A549 (cell line): ENCODE measurements at regions of chr2 and their contacts with region 1.

Region 1: DNA sequence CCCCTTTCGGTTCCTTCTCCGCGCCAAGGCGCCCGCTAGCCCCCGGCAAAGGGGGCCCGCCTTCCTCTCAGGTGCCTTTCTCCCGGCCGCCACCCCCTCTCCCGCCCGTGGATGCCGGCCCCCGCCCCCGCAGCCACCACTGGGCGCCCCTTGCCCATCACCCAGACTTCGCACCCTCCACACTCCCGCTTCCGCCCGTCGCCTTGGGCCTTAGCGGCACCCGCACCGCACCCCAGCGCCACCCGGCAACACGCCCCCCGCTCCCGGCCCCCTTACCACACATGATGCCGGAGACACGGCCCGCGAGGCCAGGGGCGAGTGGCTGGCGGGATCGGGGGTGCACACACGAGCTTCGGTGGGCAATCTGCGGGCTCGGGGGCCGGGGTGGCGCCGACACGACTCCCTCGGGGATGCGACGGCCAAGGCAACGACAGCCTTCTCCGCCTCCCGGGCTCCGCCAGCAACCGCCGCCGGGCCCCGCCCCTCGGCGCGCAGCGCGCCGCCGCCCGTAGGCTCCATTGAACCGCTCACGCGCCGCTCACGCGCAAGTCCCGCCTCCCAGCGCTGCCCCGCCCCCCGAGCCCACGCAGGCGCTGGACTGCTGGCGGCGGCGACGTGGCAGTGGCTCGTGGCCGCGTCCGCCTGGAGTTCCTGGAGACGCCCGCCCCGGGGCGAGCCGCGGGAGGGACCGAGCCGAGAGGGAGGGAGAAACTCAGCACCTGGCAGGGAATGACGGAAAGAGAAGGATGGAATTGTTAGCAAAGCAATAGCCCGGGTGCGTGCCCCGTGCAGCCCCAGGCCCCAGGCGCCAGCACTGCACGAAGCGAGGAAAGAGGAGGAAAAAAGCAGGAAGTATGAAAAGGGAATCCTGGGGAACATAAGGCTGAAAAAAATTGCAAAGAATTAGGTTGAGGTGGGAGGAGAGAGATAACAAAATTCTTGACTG is at the start of gene GFPT1:
- DNase-seq: peak; percentile 78 to 95
- ATAC-seq: peak; percentile 93 to 95
- H3K4me3 ChIP-seq: peak within 1 kb of the TSS; percentile 77
- H3K27ac ChIP-seq: peak within 1 kb of the TSS; percentile 89 to 97
- H3K4me1 ChIP-seq: peaks cover 44% of the 10 kb centered on the region
- CTCF ChIP-seq: no peak
- EP300 ChIP-seq: no peak
- POLR2A ChIP-seq: peak; percentile 81
- RAD21 ChIP-seq: peak in 1 of 2 experiments; percentile 2; a peak in 1 of 5 replicates
- polyA plus RNA-seq, gene GFPT1: 53.3 and 59.9 TPM in 2 replicates

Region 2: GRCh38 chr2:69375494-69376353 is 11.3 kb before region 1 on chr2:
- CTCF ChIA-PET with region 1: interaction called, 15 read pairs
- POLR2A ChIA-PET with region 1: no interaction called
- DNase-seq: peak in 1 of 2 experiments; percentile 62
- ATAC-seq: peak; percentile 71 to 76; a peak in 5 of 6 replicates
- H3K4me3 ChIP-seq: no peak overlapping the region
- H3K27ac ChIP-seq: no peak overlapping the region
- H3K4me1 ChIP-seq: peaks cover 23% of the 10 kb centered on the region
- CTCF ChIP-seq: peak; percentile 78
- EP300 ChIP-seq: no peak
- POLR2A ChIP-seq: no peak
- RAD21 ChIP-seq: peak in 1 of 2 experiments; percentile 55; a peak in 3 of 5 replicates

Region 3: GRCh38 chr2:69773206-69773767 is 386.2 kb after region 1 on chr2:
- CTCF ChIA-PET with region 1: no interaction called
- POLR2A ChIA-PET with region 1: no interaction called
- DNase-seq: peak in 1 of 2 experiments; percentile 49
- ATAC-seq: peak; percentile 37 to 69
- H3K4me3 ChIP-seq: no peak overlapping the region
- H3K27ac ChIP-seq: peak overlapping the region; percentile 90 to 93
- H3K4me1 ChIP-seq: peaks cover 99% of the 10 kb centered on the region
- CTCF ChIP-seq: no peak
- EP300 ChIP-seq: no peak
- POLR2A ChIP-seq: no peak
- RAD21 ChIP-seq: no peak